Ascending aorta (tissue), 2 donors: ENCODE measurements at regions of chr19 and their contacts with region 1.

Region 1: DNA sequence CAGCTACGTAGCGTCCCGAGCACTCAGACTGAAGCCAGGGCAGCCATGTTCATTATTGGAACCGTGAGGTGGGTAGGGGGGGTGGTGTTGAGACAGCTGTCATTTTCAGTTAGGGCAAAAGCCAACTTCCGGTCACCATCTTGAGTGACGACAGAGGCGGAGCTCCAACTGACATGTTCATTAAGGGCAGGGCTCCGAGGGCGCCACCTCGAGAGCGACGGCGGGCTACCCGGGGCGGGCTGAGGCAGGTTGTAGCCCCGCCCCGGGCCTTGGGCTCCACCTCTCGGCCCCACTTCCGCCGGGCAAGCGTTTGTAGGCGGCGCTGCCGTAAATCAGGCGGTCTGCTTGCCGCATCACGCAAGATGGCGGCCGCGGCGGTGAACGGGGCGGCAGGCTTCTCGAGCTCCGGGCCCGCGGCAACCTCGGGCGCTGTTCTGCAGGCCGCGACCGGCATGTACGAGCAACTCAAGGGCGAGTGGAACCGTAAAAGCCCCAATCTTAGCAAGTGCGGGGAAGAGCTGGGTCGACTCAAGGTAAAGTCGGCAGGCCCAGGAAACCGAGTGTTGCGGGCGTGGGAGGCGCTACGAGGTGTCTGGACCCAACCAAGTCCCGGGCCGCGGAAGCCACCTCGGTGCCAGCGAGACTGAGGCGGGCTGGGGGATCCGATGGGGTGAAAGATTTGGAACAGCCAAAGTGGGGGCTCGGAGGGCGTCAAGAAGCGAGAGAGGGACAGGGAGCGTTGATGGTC is at the start of gene PSMD8:
- DNase-seq: peak; percentile 98 to 100
- H3K4me3 ChIP-seq: peak within 1 kb of the TSS; percentile 75 to 79
- H3K27ac ChIP-seq: peak within 1 kb of the TSS; percentile 84
- H3K4me1 ChIP-seq: peaks cover 9 to 14% of the 10 kb centered on the region in 2 donors
- H3K27me3 ChIP-seq: no peaks in the 10 kb centered on the region
- CTCF ChIP-seq: peak in 2 of 3 experiments; percentile 8 to 25
- total RNA-seq, gene PSMD8: 235 TPM

Region 2: GRCh38 chr19:38229585-38230073 is 145.0 kb before region 1 on chr19:
- intact Hi-C with region 1: loop called (anchors 5 kb)
- DNase-seq: peak in 1 of 2 donors; percentile 77
- H3K4me3 ChIP-seq: peak overlapping the region in 1 of 2 donors; percentile 45
- H3K27ac ChIP-seq: no peak overlapping the region
- H3K4me1 ChIP-seq: peaks cover 11 to 12% of the 10 kb centered on the region in 2 donors
- H3K27me3 ChIP-seq: peaks cover 32% of the 10 kb centered on the region
- CTCF ChIP-seq: no peak

Region 3: GRCh38 chr19:38315657-38316476 is 58.7 kb before region 1 on chr19 and contains the start of gene YIF1B:
- intact Hi-C with region 1: loop called (anchors 2 kb)
- DNase-seq: peak; percentile 97 to 99
- H3K4me3 ChIP-seq: peak within 1 kb of the TSS; percentile 68 to 70
- H3K27ac ChIP-seq: peak within 1 kb of the TSS; percentile 79 to 85
- H3K4me1 ChIP-seq: peaks cover 7 to 25% of the 10 kb centered on the region in 2 donors
- H3K27me3 ChIP-seq: no peaks in the 10 kb centered on the region
- CTCF ChIP-seq: no peak
- total RNA-seq, gene YIF1B: 24.7 TPM

Region 4: GRCh38 chr19:38402967-38403861 is 28.6 kb after region 1 on chr19 and contains the start of gene FAM98C:
- intact Hi-C with region 1: loop called (anchors 1 kb)
- DNase-seq: peak; percentile 92 to 99
- H3K4me3 ChIP-seq: peak within 1 kb of the TSS; percentile 93
- H3K27ac ChIP-seq: peak within 1 kb of the TSS; percentile 72 to 73
- H3K4me1 ChIP-seq: peaks cover 0 to 11% of the 10 kb centered on the region in 2 donors
- H3K27me3 ChIP-seq: no peaks in the 10 kb centered on the region
- CTCF ChIP-seq: peak; percentile 95 to 97 (median 96)
- total RNA-seq, gene FAM98C: 11.1 TPM

Region 5: DNA sequence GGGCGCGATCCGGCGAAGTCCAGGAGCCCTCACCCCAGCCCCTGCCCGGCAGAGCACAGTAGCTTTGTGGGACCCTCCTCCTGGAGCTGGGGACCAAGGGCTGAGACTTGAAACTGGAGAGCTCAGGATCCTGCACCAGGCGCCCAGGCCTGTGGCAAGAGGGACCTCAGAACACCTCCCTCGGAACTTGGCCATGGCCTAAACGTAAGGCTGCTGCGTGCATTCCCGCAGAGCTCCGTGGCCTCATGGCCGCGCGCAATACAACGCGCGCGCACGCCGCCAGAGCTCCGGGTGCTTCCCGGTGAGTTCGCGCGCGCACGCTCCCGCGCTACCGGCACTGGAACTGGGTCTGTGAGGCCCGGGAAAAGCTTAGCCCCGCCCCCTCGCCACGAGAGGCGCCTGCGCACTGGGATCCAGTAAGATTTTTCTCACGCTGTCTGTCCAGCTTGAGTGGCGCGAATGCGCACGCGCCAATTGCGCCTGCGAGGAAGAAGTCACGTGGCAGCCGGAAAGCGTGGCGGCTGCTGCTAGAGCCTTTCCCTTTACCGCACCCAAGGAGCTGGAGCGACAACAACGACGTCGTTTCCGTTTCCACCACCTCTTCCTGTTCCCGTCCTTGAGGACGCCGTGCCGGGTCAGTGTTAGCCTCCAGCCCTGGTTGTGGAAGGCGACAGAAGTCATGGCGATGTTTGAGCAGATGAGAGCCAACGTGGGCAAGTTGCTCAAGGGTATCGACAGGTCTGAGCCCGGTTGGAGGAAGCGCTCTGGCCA is 244.2 kb after region 1 on chr19 and contains the start of gene EIF3K:
- intact Hi-C with region 1: loop called (anchors 2 kb)
- DNase-seq: peak; percentile 97 to 99
- H3K4me3 ChIP-seq: peak within 1 kb of the TSS; percentile 75 to 91
- H3K27ac ChIP-seq: peak within 1 kb of the TSS; percentile 87 to 88
- H3K4me1 ChIP-seq: peaks cover 9 to 10% of the 10 kb centered on the region in 2 donors
- H3K27me3 ChIP-seq: no peaks in the 10 kb centered on the region
- CTCF ChIP-seq: no peak
- total RNA-seq, gene EIF3K: 696 TPM